IMR-90 (cell line): ENCODE measurements at regions of chr6 and their contacts with region 1.

Region 1: GRCh38 chr6:149316798-149317655 is 485 bp upstream of the TAB2 start:
- DNase-seq: peak; percentile 89
- ATAC-seq: peak; percentile 90
- H3K4me3 ChIP-seq: peak overlapping the region; percentile 99
- H3K27ac ChIP-seq: peak overlapping the region; percentile 97
- H3K4me1 ChIP-seq: peaks cover 4% of the 10 kb centered on the region
- H3K27me3 ChIP-seq: no peaks in the 10 kb centered on the region; the same call in 1 of the 2 replicates
- CTCF ChIP-seq: no peak
- POLR2A ChIP-seq: peak; percentile 63; the same call in 1 of the 2 replicates
- RAD21 ChIP-seq: 0 out of 2 replicates have a peak, but pooled peaks have one; percentile 8

Region 2: DNA sequence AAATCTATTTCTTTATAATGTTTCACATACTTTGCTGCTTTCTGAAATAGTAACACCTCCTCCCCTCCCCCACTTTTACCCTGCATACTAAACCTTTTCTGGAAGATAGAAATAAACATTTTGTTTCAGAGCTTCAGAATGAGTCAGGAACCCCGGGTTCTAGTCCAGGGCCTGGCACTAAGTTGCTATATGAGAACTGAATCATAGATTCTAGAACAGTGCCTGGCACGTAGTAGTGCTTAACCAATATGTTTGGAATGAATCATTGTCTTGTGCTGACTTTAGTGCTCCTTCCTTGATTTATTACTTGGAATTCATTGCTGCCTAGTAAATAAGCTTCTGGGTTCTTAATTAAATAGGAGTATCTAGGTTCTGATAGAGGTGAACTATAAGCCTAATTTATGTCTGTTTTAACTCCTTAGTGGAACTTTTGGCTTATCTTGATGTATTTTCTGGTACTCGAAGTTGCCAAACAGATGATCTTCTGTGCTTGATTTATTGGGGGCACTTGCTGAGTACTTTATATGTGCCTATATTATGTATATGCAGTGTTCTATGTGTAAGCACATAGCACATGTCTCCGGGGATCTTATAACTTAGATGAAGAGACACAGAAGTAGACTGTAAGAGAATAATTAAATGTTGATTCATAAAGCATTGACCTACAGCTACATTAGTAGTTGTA is 19.0 kb after region 1 on chr6:
- CTCF ChIA-PET with region 1: interaction called, 3 read pairs
- POLR2A ChIA-PET with region 1: no interaction called
- dilution Hi-C with region 1: no loop called
- in situ Hi-C with region 1: no loop called
- intact Hi-C with region 1: loop called (anchors 2 kb)
- DNase-seq: peak; percentile 69
- ATAC-seq: no peak
- H3K4me3 ChIP-seq: no peak overlapping the region
- H3K27ac ChIP-seq: no peak overlapping the region
- H3K4me1 ChIP-seq: peaks cover 16% of the 10 kb centered on the region
- H3K27me3 ChIP-seq: no peaks in the 10 kb centered on the region
- CTCF ChIP-seq: no peak
- POLR2A ChIP-seq: no peak
- RAD21 ChIP-seq: no peak

Region 3: GRCh38 chr6:149513915-149514314 is 196.9 kb after region 1 on chr6:
- CTCF ChIA-PET with region 1: no interaction called
- POLR2A ChIA-PET with region 1: no interaction called
- dilution Hi-C with region 1: no loop called
- in situ Hi-C with region 1: no loop called
- intact Hi-C with region 1: loop called (anchors 5 kb)
- DNase-seq: no peak
- ATAC-seq: no peak
- H3K4me3 ChIP-seq: no peak overlapping the region
- H3K27ac ChIP-seq: no peak overlapping the region
- H3K4me1 ChIP-seq: no peaks in the 10 kb centered on the region
- H3K27me3 ChIP-seq: no peaks in the 10 kb centered on the region
- CTCF ChIP-seq: no peak
- POLR2A ChIP-seq: no peak
- RAD21 ChIP-seq: no peak

Region 4: GRCh38 chr6:149580880-149581279 is 263.9 kb after region 1 on chr6:
- CTCF ChIA-PET with region 1: no interaction called
- POLR2A ChIA-PET with region 1: no interaction called
- dilution Hi-C with region 1: no loop called
- in situ Hi-C with region 1: no loop called
- intact Hi-C with region 1: no loop called
- DNase-seq: no peak
- ATAC-seq: no peak
- H3K4me3 ChIP-seq: no peak overlapping the region
- H3K27ac ChIP-seq: no peak overlapping the region
- H3K4me1 ChIP-seq: no peaks in the 10 kb centered on the region
- H3K27me3 ChIP-seq: no peaks in the 10 kb centered on the region
- CTCF ChIP-seq: no peak
- POLR2A ChIP-seq: no peak
- RAD21 ChIP-seq: no peak